ENCODE measurements at regions of chrX and their contacts with region 1.

Region 1: DNA sequence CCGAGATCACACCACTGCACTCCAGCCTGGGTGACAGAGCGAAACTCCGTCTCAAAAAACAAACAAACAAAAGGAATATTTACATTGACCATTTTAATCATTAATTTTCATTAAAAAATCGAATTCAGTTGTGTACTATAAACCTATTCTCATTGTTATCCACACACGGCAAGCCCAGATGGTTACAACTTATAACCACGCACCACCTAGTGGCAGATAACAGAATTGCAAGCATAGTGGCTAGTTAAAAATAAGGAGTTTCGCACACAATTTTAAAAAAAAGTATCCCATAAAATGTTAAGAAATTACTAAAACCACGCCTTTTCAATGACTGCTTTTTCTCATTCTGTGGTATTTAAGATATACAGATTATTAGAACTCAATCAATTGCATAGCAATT is 25.4 kb downstream of the MBNL3 start:
- DNase-seq: no peak
- H3K4me3 ChIP-seq: no peak overlapping the region
- H3K27ac ChIP-seq: no peak overlapping the region
- H3K4me1 ChIP-seq: no peaks in the 10 kb centered on the region
- H3K27me3 ChIP-seq: no peaks in the 10 kb centered on the region
- CTCF ChIP-seq: peak in 2 of 3 experiments; percentile 11 to 14

Region 2: GRCh38 chrX:132059973-132060540 is 403.4 kb before region 1 on chrX:
- intact Hi-C with region 1: no loop called
- DNase-seq: no peak
- H3K4me3 ChIP-seq: no peak overlapping the region
- H3K27ac ChIP-seq: no peak overlapping the region
- H3K4me1 ChIP-seq: no peaks in the 10 kb centered on the region
- H3K27me3 ChIP-seq: no peaks in the 10 kb centered on the region
- CTCF ChIP-seq: no peak

Region 3: GRCh38 chrX:132532955-132533354 is 69.5 kb after region 1 on chrX:
- intact Hi-C with region 1: loop called (anchors 2 kb)
- DNase-seq: no peak
- H3K4me3 ChIP-seq: no peak overlapping the region
- H3K27ac ChIP-seq: no peak overlapping the region
- H3K4me1 ChIP-seq: no peaks in the 10 kb centered on the region
- H3K27me3 ChIP-seq: no peaks in the 10 kb centered on the region
- CTCF ChIP-seq: no peak